Dorsolateral prefrontal cortex (tissue), 120 donors: ENCODE measurements at regions of chr10 and their contacts with region 1.

Region 1: DNA sequence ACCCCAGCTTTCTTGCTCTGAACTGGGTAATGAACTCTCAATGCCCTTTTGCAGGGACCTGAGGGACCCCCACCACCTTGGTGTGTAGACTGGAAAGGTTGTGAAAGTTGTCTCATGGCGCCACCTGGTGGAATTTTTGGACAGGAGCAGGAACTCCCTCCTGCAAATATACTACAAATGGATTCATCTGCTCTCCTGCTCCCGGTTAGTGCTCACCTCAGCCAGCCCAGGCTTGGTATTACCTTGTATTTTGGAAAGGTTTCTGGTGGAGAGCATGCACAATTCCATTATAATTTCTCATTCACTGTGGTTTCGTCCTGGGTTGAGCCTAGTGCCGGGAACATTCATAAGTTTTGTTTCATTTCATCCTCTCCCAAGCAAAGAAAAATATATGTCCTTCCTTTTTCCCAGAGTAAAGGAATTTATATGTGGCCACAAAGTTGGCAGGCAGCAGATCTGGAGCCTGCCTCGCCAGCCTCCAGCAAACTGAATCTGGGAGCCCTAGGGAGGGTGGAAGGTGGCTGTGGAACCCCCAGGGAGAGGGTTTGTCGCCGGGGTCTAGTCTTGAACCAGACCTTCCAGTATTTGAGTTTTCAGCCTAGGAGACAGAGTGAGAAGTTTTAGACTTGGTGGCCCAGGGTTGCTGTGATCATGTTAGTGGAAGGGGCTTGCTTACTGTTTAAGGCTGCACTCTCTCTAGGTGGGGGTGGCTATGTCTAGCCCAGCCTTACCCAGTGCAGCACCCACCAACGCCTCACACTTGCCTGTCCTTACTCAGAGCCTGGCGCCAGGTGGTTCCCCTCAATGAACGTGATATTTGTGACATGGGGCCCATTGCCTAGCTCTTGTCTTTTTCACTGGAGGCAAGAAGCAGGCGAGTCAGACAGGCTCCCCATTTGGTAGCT is 9.5 kb downstream of the FAM241B start:
- DNase-seq: peak in 9 of 10 donors; percentile 61 to 83 (median 73)
- H3K4me3 ChIP-seq: no peak overlapping the region
- H3K27ac ChIP-seq: peak overlapping the region in 1 of 59 donors; percentile 82
- H3K27me3 ChIP-seq: peaks cover 0 to 4% (median 0%) of the 10 kb centered on the region in 45 donors
- CTCF ChIP-seq: peak; percentile 82 to 97 (median 92)

Region 2: GRCh38 chr10:69232252-69232651 is 407.3 kb before region 1 on chr10:
- intact Hi-C with region 1: loop called (anchors 5 to 10 kb)
- DNase-seq: no peak
- H3K4me3 ChIP-seq: no peak overlapping the region
- H3K27ac ChIP-seq: no peak overlapping the region
- H3K27me3 ChIP-seq: peaks cover 0 to 10% (median 0%) of the 10 kb centered on the region in 45 donors
- CTCF ChIP-seq: no peak

Region 3: GRCh38 chr10:69237528-69238159 is 401.9 kb before region 1 on chr10:
- intact Hi-C with region 1: loop called (anchors 5 to 10 kb)
- DNase-seq: peak; percentile 81 to 94 (median 91)
- H3K4me3 ChIP-seq: peak overlapping the region in 5 of 59 donors; percentile 2 to 25 (median 15)
- H3K27ac ChIP-seq: peak overlapping the region in 1 of 59 donors; percentile 44
- H3K27me3 ChIP-seq: peaks cover 0 to 3% (median 0%) of the 10 kb centered on the region in 45 donors
- CTCF ChIP-seq: peak; percentile 84 to 100 (median 97)

Region 4: GRCh38 chr10:69408318-69409175 is 231.0 kb before region 1 on chr10:
- intact Hi-C with region 1: loop called (anchors 2 to 5 kb)
- DNase-seq: peak; percentile 79 to 96 (median 89)
- H3K4me3 ChIP-seq: peak overlapping the region; percentile 39 to 73 (median 59)
- H3K27ac ChIP-seq: peak overlapping the region in 58 of 59 donors; percentile 55 to 97 (median 84)
- H3K27me3 ChIP-seq: no peaks in the 10 kb centered on the region
- CTCF ChIP-seq: peak; percentile 29 to 93 (median 80)

Region 5: DNA sequence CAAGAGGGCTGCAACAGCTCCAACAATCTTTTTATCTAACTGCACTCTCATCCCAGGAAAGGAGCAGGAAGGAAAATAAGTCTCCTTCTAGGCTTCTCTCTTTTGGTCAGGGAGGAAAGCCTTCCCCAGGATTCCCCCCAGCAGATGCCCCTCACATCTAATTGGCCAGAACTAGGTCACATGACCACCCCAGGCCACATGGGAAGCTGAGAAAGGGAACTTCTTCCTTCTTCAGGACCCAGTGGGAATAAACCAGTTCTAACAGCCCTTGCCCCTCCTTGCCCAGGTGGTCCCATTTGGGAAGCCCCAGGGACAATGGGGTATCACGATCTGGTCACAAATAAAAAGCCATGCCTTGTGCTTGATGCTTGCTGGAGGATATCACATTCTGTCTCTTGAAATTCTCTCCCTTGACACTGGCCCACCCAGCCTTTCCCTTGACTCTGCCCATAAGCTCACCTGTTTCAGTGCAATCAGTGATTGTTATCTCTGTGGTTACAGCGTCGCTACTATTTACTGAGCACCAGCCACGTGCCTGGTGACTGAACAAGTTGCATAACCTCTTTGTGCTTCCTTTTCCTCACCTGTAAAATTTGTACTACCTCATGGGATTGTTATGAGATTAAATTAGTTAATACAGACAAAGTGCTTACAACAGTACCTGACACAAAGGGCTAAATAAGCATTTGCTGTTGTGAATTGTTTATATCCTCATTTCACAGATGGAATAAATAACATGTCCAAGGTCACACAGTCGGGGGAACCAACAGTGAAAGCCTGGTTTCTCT is 213.8 kb before region 1 on chr10:
- intact Hi-C with region 1: loop called in 1 of 2 experiments (anchors 5 kb)
- DNase-seq: no peak
- H3K4me3 ChIP-seq: no peak overlapping the region
- H3K27ac ChIP-seq: no peak overlapping the region
- H3K27me3 ChIP-seq: no peaks in the 10 kb centered on the region
- CTCF ChIP-seq: no peak

Region 6: GRCh38 chr10:69438242-69439068 is 201.1 kb before region 1 on chr10:
- intact Hi-C with region 1: no loop called
- DNase-seq: no peak
- H3K4me3 ChIP-seq: no peak overlapping the region
- H3K27ac ChIP-seq: peak overlapping the region in 1 of 59 donors; percentile 77
- H3K27me3 ChIP-seq: peaks cover 0 to 5% (median 0%) of the 10 kb centered on the region in 45 donors
- CTCF ChIP-seq: no peak

Region 7: GRCh38 chr10:69515699-69516259 is 123.8 kb before region 1 on chr10:
- intact Hi-C with region 1: loop called (anchors 2 kb)
- DNase-seq: peak in 8 of 10 donors; percentile 56 to 80 (median 75)
- H3K4me3 ChIP-seq: no peak overlapping the region
- H3K27ac ChIP-seq: no peak overlapping the region
- H3K27me3 ChIP-seq: no peaks in the 10 kb centered on the region
- CTCF ChIP-seq: peak; percentile 27 to 80 (median 67)

Region 8: GRCh38 chr10:69914398-69915214 is 275.1 kb after region 1 on chr10:
- intact Hi-C with region 1: loop called (anchors 2 to 5 kb)
- DNase-seq: peak; percentile 66 to 87 (median 76)
- H3K4me3 ChIP-seq: no peak overlapping the region
- H3K27ac ChIP-seq: no peak overlapping the region
- H3K27me3 ChIP-seq: peaks cover 0 to 9% (median 0%) of the 10 kb centered on the region in 45 donors
- CTCF ChIP-seq: peak; percentile 85 to 99 (median 96)